Sigmoid colon (tissue), 7 donors: ENCODE measurements at regions of chr12 and their contacts with region 1.

Region 1: DNA sequence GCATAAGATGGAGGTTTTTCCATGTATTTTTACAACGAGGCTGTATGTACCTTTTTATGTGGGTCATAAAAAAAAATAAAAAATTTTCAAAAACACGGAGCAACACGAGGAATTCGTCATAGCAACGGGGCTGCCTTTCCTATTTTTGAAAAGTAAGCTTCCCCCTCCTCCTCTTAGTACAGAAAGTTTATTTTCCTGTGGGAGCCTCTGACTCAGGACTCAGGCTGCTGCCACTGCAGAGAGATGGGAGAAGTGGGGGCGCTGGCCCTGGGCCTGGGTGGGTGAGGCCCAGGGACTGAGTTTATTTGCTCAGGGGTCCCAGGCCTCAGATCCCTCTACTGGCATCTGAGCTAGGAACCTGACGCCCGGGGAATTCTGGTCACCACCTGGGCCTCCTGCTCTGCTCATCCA is 10.2 kb upstream of the CMKLR1 start:
- DNase-seq: no peak
- H3K4me3 ChIP-seq: no peak overlapping the region
- H3K27ac ChIP-seq: peak overlapping the region in 3 of 4 donors; percentile 14 to 39 (median 34)
- H3K4me1 ChIP-seq: no peaks in the 10 kb centered on the region
- H3K27me3 ChIP-seq: no peaks in the 10 kb centered on the region
- CTCF ChIP-seq: no peak
- EP300 ChIP-seq: no peak
- POLR2A ChIP-seq: no peak

Region 2: GRCh38 chr12:108390495-108391203 is 41.4 kb after region 1 on chr12:
- intact Hi-C with region 1: no loop called
- DNase-seq: peak; percentile 65
- H3K4me3 ChIP-seq: no peak overlapping the region
- H3K27ac ChIP-seq: no peak overlapping the region
- H3K4me1 ChIP-seq: peaks cover 0 to 16% (median 15%) of the 10 kb centered on the region in 4 donors
- H3K27me3 ChIP-seq: no peaks in the 10 kb centered on the region
- CTCF ChIP-seq: no peak
- EP300 ChIP-seq: no peak
- POLR2A ChIP-seq: no peak

Region 3: GRCh38 chr12:108446766-108447165 is 97.5 kb after region 1 on chr12:
- intact Hi-C with region 1: loop called (anchors 5 kb)
- DNase-seq: peak; percentile 82
- H3K4me3 ChIP-seq: no peak overlapping the region
- H3K27ac ChIP-seq: peak overlapping the region in 3 of 4 donors; percentile 12 to 56 (median 22)
- H3K4me1 ChIP-seq: no peaks in the 10 kb centered on the region
- H3K27me3 ChIP-seq: peaks cover 0 to 4% (median 0%) of the 10 kb centered on the region in 3 donors
- CTCF ChIP-seq: no peak
- EP300 ChIP-seq: no peak
- POLR2A ChIP-seq: no peak